ENCODE measurements at regions of chr12 and their contacts with region 1.

Region 1: DNA sequence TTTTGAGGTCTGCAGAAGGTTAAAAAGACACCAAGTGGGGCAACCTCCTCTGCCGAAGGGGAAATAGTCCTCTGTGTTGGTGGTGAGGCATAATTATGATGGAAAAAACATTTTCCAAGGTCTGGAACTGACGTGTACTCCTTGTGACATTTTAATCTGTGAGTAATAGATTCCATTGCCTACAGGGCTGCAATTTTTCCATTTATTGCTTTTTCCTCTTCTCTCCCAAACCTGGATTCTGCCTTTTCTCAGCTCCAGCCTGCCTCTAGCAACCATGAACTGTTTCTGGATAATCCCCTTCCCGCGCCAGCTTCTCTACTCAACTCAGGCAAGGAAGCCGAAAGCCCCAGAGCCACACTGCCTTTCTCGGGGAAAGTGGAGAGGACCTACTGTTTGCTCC is 230.1 kb upstream of the PLXNC1 start:
- DNase-seq: peak in 1 of 2 donors; percentile 74
- H3K4me3 ChIP-seq: no peak overlapping the region
- H3K27ac ChIP-seq: peak overlapping the region; percentile 91 to 94
- H3K4me1 ChIP-seq: peaks cover 4 to 26% of the 10 kb centered on the region in 2 donors
- H3K27me3 ChIP-seq: no peaks in the 10 kb centered on the region
- CTCF ChIP-seq: no peak

Region 2: GRCh38 chr12:93778306-93778705 is 140.0 kb before region 1 on chr12:
- intact Hi-C with region 1: loop called (anchors 5 kb)
- DNase-seq: peak in 1 of 2 donors; percentile 84
- H3K4me3 ChIP-seq: peak overlapping the region in 1 of 2 donors; percentile 15
- H3K27ac ChIP-seq: peak overlapping the region; percentile 91 to 92
- H3K4me1 ChIP-seq: peaks cover 17 to 32% of the 10 kb centered on the region in 2 donors
- H3K27me3 ChIP-seq: no peaks in the 10 kb centered on the region
- CTCF ChIP-seq: no peak

Region 3: DNA sequence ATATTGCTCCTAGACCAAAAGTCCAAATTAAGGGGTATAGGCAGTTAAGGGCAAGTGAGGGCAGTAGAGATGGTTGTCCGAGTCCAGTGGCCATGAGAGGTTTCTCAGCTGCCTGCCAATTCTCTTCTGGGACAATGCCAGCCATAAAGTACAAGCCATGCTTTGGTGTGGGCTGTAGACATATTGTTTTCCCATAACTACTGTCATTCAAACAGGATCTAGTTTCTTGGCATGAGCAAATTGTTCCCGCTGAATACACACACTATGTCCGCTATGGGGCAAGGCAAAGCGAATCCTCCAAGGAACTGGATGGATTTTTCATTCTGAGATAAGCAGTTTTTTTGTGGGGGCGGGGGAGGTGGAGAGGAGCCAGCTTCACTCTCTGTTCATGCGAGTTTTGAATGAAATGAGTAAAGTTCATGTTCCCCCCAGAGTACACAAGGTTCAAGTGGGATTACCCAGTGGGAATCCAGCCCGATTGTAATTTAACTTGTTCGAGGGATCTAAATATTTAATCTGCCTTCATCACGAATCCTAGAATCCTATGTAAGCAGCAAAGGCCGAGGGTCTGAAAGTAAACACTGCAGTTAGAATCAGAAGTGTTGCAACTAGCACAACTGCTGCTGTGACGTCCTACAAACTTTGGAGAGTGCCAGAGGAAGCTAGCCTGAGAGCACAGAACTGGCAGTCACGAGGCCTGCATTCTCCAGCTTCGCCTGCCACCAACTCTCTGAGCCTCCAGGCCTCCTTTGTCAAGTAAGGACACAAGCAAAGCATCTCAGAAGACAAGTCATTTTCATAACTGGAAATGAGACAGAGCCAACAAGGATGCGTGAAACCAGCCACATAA is 104.1 kb before region 1 on chr12:
- intact Hi-C with region 1: loop called (anchors 5 kb)
- DNase-seq: peak; percentile 21 to 92
- H3K4me3 ChIP-seq: peak overlapping the region; percentile 24 to 43
- H3K27ac ChIP-seq: peak overlapping the region; percentile 85 to 98
- H3K4me1 ChIP-seq: peaks cover 4 to 39% of the 10 kb centered on the region in 2 donors
- H3K27me3 ChIP-seq: no peaks in the 10 kb centered on the region
- CTCF ChIP-seq: no peak

Region 4: DNA sequence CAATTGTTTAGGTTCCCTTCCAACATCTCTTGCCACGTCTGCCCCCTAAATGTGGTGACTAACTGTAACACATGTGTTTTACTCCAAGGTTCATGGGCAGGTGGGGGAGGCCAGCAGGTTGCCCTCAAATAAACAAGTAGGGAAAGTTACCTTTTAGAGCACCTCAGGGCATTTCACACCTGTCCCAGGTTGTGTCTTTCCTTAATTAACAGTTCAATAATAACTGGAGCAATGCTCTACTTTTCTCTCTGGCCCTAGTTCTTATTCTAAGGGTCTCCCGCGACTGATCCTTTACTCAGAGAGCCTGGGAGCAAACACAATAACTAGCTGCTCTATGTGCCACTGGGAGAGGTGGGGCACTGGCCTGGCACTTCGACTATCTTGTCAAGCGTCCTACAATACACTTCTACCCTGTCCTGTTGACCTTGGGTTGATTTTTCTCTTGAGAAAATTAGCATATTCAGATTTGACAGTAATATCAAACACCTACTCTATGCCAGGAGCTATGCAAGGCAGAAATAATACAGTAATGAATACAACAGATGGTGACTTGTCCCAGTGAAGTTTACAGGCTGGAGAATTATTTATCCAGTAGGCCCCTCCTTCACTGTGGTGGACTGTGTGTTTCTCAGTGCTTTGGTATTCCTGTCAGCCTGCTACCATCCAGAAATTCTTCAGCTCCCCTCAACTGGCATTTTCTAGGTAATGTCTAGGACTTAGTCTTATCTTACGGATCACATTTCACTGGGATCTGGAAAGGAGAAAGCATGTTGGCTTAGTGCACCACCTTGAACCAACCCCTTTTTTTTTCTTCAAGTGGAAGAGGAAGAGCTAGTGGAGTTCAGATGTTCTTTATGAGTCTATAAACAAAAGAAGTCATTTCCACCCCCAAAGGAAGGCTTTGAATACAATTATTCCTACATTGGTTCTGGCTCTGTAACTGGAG is 38.5 kb before region 1 on chr12:
- intact Hi-C with region 1: no loop called
- DNase-seq: no peak
- H3K4me3 ChIP-seq: no peak overlapping the region
- H3K27ac ChIP-seq: no peak overlapping the region
- H3K4me1 ChIP-seq: no peaks in the 10 kb centered on the region
- H3K27me3 ChIP-seq: no peaks in the 10 kb centered on the region
- CTCF ChIP-seq: no peak

Region 5: GRCh38 chr12:93894391-93895088 is 23.7 kb before region 1 on chr12:
- intact Hi-C with region 1: loop called (anchors 1 kb)
- DNase-seq: peak; percentile 57 to 94
- H3K4me3 ChIP-seq: peak overlapping the region in 1 of 2 donors; percentile 2
- H3K27ac ChIP-seq: peak overlapping the region; percentile 73 to 75
- H3K4me1 ChIP-seq: peaks cover 4 to 17% of the 10 kb centered on the region in 2 donors
- H3K27me3 ChIP-seq: no peaks in the 10 kb centered on the region
- CTCF ChIP-seq: no peak

Region 6: GRCh38 chr12:93943766-93944165 is 25.5 kb after region 1 on chr12:
- intact Hi-C with region 1: loop called (anchors 1 kb)
- DNase-seq: peak in 1 of 2 donors; percentile 76
- H3K4me3 ChIP-seq: no peak overlapping the region
- H3K27ac ChIP-seq: no peak overlapping the region
- H3K4me1 ChIP-seq: peaks cover 0 to 4% of the 10 kb centered on the region in 2 donors
- H3K27me3 ChIP-seq: no peaks in the 10 kb centered on the region
- CTCF ChIP-seq: no peak

Region 7: GRCh38 chr12:93979189-93979588 is 60.9 kb after region 1 on chr12:
- intact Hi-C with region 1: loop called (anchors 10 kb)
- DNase-seq: no peak
- H3K4me3 ChIP-seq: no peak overlapping the region
- H3K27ac ChIP-seq: no peak overlapping the region
- H3K4me1 ChIP-seq: peaks cover 0 to 7% of the 10 kb centered on the region in 2 donors
- H3K27me3 ChIP-seq: no peaks in the 10 kb centered on the region
- CTCF ChIP-seq: peak; percentile 10 to 40 (median 20)

Region 8: DNA sequence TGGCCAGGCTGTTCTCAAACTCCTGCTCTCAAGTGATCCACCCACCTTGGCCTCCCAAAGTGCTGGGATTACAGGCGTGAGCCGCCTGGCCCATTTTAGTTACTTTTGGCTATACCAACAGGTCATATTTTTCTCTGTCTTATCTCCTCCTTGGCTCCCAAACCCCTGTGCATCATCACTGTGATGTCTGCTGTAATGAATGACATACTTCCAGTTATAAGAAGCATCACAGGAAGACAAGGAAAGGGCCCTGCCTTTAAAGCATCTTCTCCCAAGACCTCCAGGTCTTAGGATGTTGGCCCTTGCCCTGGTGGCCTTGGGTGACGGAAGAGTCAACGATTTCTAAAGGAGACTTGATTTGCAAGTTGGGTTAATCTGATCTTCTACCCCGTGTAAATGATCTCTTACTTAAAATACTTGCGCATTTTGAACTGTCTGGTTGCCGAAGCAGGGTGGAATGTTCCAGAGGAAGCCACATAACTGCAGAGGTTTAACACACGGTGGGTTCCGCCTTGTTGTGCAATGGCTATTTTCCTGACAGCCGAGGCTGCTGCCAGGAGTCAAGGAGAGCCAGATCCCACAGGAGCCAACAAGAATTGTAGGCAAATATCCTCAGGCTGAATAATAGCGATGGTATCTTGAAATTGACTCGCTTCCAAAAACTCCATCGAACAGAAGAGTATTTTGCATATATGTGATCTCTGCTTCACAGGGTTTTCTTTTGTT is 174.4 kb after region 1 on chr12:
- intact Hi-C with region 1: no loop called
- DNase-seq: peak in 1 of 2 donors; percentile 90
- H3K4me3 ChIP-seq: no peak overlapping the region
- H3K27ac ChIP-seq: peak overlapping the region; percentile 33 to 54
- H3K4me1 ChIP-seq: peaks cover 5 to 16% of the 10 kb centered on the region in 2 donors
- H3K27me3 ChIP-seq: no peaks in the 10 kb centered on the region
- CTCF ChIP-seq: no peak